Activated CD8-positive, alpha-beta T cell treated with anti-CD3 and anti-CD28 coated beads for 36 hours (primary cell): ENCODE measurements at regions of chr19 and their contacts with region 1.

Region 1: DNA sequence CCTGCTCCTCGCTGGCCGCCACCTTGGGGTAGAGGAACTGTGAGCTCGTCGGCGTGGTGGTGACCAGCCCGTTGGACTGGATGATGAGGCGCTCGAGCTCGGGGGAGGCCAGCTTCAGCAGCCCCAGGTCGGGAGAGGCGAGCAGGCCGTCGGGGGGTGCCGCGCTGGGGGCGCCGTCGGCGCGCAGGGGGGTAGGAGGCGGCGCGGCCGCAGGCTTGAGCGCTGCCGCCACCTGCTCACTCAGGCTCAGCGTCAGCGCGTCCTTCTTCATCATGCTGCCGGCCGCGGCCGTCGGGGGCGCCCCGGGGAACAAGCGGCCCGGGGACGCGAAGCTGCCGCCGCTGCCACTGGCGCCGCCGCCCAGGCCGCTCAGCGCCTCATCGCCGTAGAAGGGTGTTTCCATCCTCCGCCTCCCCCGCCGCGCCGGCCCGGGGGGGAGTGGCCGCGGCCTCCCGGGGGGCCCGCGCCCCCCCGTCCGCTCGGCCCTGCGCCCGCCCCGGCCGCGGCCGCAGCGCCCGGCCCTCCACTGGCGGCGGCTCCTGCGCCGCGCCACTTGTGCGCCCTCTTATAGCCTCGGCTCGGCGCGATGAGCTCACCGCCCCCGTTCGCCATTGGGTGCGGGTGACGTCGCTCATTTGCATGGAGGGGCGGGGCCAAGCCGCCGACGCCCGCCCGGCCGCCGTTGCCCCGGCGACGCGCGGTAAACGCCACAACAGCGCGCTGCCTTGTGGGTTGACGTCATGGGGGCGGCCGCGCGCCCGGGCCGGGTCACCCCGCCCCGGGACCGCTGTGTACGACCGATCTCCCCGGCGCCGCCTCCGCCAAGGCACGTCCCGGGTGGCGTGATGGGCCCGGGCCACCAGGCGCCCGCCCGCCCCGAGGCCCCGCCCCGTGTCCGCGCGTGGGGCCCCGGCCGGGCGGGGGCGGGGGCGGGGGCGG is at the start of gene JUND:
- DNase-seq: peak; percentile 98
- ATAC-seq: peak; percentile 69
- H3K4me3 Mint-ChIP-seq: peak within 1 kb of the TSS; percentile 92
- H3K27ac Mint-ChIP-seq: peak within 1 kb of the TSS; percentile 100
- H3K4me1 Mint-ChIP-seq: peaks cover 37% of the 10 kb centered on the region
- H3K27me3 Mint-ChIP-seq: no peaks in the 10 kb centered on the region
- CTCF ChIP-seq: no peak
- total RNA-seq, gene JUND: 527 to 530 TPM

Region 2: GRCh38 chr19:18141031-18141430 is 140.3 kb before region 1 on chr19:
- CTCF ChIA-PET with region 1: no interaction called
- POLR2A ChIA-PET with region 1: no interaction called
- intact Hi-C with region 1: no loop called
- DNase-seq: no peak
- ATAC-seq: no peak
- H3K4me3 Mint-ChIP-seq: no peak overlapping the region
- H3K27ac Mint-ChIP-seq: no peak overlapping the region
- H3K4me1 Mint-ChIP-seq: no peaks in the 10 kb centered on the region
- H3K27me3 Mint-ChIP-seq: no peaks in the 10 kb centered on the region
- CTCF ChIP-seq: no peak

Region 3: DNA sequence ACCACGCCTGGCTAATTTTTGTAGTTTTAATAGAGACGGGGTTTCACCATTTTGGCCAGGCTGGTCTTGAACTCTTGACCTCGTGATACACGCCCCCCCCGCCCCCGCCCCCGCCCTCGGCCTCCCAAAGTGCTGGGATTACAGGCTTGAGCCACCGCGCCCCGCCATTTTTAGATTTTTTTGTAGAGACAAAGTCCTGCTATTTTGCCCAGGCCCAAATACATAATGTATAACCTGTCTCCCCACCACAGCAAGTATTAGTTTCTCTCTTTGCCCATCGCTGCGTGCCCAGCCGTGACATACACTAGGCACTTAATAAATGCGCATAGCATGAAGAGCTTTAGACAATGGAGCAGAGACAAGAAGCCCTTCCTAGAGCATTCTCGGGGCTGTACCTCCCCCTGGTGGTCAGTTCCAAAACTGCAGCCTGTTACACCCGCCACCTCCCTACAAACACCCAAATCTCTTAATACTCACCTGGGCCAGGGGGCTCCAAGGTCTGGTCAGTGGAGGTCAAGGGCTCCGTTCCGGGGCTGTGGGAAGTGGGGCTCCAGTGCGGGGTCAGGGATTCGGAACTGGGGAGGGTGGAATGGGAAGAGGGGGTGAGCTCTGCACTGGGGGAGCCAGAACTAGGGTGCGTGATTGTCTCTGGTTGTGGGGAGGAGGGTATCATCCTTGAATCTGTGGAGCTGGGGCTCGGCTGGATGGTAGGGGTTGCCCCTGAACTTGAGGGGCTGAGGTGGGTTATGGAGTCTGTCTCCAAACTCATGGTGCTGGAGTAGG is 29.6 kb before region 1 on chr19:
- CTCF ChIA-PET with region 1: interaction called, 36 read pairs
- POLR2A ChIA-PET with region 1: no interaction called
- intact Hi-C with region 1: no loop called
- DNase-seq: peak; percentile 91
- ATAC-seq: peak; percentile 95
- H3K4me3 Mint-ChIP-seq: no peak overlapping the region
- H3K27ac Mint-ChIP-seq: no peak overlapping the region
- H3K4me1 Mint-ChIP-seq: peaks cover 2% of the 10 kb centered on the region
- H3K27me3 Mint-ChIP-seq: peaks cover 21% of the 10 kb centered on the region
- CTCF ChIP-seq: peak; percentile 90

Region 4: DNA sequence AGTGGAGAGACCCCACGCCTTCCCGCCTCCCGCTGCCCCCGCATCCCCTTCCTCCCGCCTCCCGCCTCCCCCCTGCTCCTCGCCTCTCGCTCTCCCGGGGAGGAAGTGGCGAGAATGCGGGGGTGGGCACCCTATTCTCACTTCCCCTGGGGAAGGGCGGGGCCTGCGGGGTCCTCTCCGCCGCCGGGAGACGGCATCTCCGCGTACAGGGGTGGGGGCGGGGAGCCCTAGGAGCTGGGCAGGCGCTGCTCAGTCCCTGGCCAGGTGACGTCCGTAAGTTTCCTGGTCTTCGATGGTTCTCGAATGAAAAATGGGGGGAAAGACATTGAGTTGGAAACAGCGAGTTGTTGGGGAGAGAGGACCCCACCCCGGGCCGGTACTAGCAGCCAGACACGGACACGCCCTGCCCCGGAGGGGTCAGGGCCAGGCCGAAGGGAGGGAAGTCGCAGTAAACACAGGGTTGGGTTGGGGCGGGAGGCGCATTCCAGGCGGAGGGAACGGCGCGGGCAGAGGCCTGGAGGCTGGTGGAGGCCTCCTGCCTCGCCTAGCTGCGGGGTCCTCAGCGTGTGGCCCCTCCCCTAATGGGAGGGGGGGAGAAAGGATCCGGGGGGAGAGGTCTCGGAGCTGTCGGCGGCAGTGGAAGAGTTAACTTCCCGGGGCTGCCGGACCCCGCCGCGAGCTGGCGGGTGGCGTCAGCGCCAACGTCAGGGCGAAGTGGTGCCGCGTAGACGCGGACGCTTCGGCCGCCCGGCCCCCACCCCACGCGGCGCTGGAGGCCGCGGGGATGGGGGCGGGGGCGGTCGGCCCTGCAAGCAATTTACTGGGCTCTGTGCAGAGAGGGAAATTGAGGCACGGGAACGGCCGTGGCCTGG is 10.5 kb after region 1 on chr19:
- CTCF ChIA-PET with region 1: interaction called, 119 read pairs
- POLR2A ChIA-PET with region 1: interaction called, 225 read pairs
- intact Hi-C with region 1: no loop called
- DNase-seq: peak; percentile 98
- ATAC-seq: peak; percentile 57
- H3K4me3 Mint-ChIP-seq: peak overlapping the region; percentile 85
- H3K27ac Mint-ChIP-seq: peak overlapping the region; percentile 93
- H3K4me1 Mint-ChIP-seq: peaks cover 64% of the 10 kb centered on the region
- H3K27me3 Mint-ChIP-seq: no peaks in the 10 kb centered on the region
- CTCF ChIP-seq: no peak

Region 5: DNA sequence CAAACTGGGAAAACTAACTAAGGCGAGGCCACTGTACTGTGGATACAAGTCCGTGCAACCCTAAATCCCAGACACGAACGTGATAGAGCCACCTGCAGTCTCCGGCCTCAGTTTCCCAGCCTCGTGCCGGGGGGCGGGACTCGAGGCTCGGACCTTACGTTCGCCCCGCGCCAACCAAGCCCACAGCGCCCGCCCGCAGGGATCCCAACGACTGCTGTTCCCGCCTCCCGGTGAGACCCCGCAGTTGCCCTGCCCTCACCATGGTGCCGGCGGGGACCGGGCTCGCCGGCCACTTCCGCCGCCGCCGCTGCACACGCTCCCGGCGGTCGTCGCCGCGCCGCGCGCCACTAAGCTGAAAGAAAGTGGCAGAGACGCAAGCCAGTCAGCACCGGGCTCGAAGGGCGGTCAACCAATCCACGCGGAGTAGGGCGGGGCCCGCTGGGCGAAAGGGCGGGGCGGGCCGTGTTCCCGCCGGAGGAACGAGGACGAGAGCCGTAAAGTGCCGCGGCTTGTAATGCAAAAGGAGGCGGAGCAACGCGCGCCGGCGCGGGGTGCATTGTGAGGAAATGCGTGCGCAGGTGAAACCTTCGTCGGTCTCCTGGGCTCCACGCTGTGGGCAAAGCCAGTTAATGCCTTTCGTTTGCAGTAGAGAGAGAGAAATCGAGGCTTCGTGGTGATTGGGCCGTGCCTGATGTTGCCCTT is 41.6 kb after region 1 on chr19 and contains the start of gene LSM4:
- CTCF ChIA-PET with region 1: interaction called, 330 read pairs
- POLR2A ChIA-PET with region 1: interaction called, 592 read pairs
- intact Hi-C with region 1: loop called (anchors 1 kb)
- DNase-seq: peak; percentile 100
- ATAC-seq: peak; percentile 94
- H3K4me3 Mint-ChIP-seq: peak within 1 kb of the TSS; percentile 85
- H3K27ac Mint-ChIP-seq: peak within 1 kb of the TSS; percentile 99
- H3K4me1 Mint-ChIP-seq: peaks cover 50% of the 10 kb centered on the region
- H3K27me3 Mint-ChIP-seq: no peaks in the 10 kb centered on the region
- CTCF ChIP-seq: peak; percentile 45
- total RNA-seq, gene LSM4: 426 to 433 TPM

Region 6: DNA sequence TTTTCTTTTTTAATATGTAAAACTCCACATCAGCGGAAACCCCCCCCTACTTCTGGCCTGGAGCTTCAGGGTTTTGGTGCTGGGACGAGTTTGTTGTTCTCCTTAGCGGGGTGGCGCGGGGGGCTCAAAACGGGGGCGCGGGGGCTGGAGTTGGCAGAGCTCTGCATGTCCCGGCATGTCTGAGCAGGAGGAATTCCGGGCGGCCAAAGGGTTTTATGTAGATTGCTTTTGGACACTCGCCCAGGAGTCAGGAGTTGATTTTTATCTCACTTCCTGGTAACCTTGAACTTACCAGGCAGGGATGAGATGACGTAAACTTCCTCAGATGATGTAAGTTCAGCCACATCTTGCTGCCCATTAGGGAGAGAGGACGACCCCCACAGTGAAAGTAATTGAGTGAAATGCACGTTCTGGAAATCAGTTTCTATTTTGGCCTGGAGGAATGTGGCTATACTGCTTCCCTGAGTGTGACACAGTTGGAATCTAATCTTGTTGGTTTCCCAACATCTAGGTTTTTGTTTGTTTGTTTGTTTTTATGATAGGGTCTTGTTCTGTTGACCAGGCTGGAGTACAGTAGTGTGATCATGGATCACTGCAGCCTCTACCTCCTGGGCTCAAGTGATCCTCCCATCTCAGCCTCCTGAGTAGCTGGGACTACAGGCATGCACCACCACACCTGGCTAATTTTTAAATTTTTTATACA is 83.6 kb after region 1 on chr19:
- CTCF ChIA-PET with region 1: interaction called, 14 read pairs
- POLR2A ChIA-PET with region 1: no interaction called
- intact Hi-C with region 1: no loop called
- DNase-seq: peak; percentile 15
- ATAC-seq: no peak
- H3K4me3 Mint-ChIP-seq: no peak overlapping the region
- H3K27ac Mint-ChIP-seq: peak overlapping the region; percentile 10
- H3K4me1 Mint-ChIP-seq: no peaks in the 10 kb centered on the region
- H3K27me3 Mint-ChIP-seq: no peaks in the 10 kb centered on the region
- CTCF ChIP-seq: no peak

Region 7: GRCh38 chr19:18603255-18603957 is 322.1 kb after region 1 on chr19:
- CTCF ChIA-PET with region 1: no interaction called
- POLR2A ChIA-PET with region 1: no interaction called
- intact Hi-C with region 1: no loop called
- DNase-seq: peak; percentile 40
- ATAC-seq: peak; percentile 79
- H3K4me3 Mint-ChIP-seq: no peak overlapping the region
- H3K27ac Mint-ChIP-seq: no peak overlapping the region
- H3K4me1 Mint-ChIP-seq: peaks cover 4% of the 10 kb centered on the region
- H3K27me3 Mint-ChIP-seq: peaks cover 47% of the 10 kb centered on the region
- CTCF ChIP-seq: peak; percentile 23